Activated B cell treated with CpG ODN at 0.5 μM for 24 hours (primary cell): ENCODE measurements at regions of chr17 and their contacts with region 1.

Region 1: DNA sequence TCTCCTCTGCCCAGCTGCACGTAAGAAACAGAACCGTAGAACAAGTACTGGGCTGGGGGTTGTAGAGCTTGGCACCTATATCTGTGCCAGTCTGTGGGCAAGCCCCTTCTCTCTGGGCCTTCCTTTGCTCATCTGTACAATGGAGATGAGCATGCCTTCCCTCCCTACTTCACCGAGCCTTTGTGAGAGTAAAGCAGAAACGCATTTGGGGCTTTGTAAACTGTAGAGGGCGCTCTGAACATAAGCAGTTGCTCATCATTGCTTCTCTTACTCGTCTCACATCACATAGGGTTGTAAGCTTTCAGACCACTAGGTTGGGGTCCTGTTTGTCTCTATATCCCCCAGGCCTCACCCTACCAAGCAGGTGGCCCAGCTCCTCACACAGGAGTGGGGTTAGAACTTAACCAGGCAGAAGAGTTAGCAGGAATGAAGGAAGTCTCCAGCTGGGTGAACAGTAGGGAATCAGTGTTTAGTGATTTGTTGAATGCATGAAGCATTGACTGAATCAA is 15.1 kb downstream of the SAMD14 start:
- DNase-seq: no peak
- ATAC-seq: peak; percentile 18
- H3K4me3 Mint-ChIP-seq: peak overlapping the region; percentile 28
- H3K27ac Mint-ChIP-seq: no peak overlapping the region
- H3K4me1 Mint-ChIP-seq: peaks cover 14% of the 10 kb centered on the region
- H3K27me3 Mint-ChIP-seq: peaks cover 36% of the 10 kb centered on the region
- CTCF ChIP-seq: no peak

Region 2: DNA sequence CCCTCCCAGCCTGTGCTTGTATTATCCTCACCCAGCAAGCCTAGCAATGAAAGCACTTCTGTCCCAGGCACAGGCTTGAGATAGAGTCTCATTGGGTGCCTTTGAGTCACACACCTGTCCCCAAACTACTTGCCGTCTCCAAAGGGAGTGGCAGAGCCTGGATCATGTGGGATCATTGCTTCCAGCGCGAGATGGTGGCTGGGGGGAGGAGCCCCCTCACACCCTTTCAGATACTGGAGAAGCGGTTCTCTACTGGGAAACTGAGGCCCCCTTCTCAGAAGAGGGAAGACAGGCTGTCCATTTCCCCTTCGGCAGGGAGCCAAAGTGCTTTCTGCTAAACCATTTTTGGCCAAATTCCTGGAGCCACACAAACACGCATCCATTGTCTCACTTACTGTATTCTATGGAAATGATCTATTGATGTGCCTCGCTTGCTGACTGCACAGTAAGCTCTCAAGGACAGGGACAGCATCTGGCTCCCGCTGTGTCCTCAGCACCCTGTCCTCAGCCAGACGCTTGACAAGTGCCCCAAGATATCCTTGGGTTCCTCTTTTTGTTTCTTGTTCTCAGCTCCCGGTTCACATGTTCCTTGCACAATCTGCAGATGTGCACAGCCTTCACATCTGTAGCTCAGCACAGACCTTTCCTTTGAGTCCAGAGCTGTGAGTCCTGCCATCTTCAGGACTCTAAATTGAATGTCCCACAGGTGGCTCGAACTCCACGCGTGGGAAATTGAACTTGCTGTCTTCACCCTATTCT is 93.9 kb before region 1 on chr17:
- CTCF ChIA-PET with region 1: no interaction called
- POLR2A ChIA-PET with region 1: no interaction called
- intact Hi-C with region 1: no loop called
- DNase-seq: no peak
- ATAC-seq: no peak
- H3K4me3 Mint-ChIP-seq: no peak overlapping the region
- H3K27ac Mint-ChIP-seq: no peak overlapping the region
- H3K4me1 Mint-ChIP-seq: no peaks in the 10 kb centered on the region
- H3K27me3 Mint-ChIP-seq: peaks cover 3% of the 10 kb centered on the region
- CTCF ChIP-seq: no peak

Region 3: DNA sequence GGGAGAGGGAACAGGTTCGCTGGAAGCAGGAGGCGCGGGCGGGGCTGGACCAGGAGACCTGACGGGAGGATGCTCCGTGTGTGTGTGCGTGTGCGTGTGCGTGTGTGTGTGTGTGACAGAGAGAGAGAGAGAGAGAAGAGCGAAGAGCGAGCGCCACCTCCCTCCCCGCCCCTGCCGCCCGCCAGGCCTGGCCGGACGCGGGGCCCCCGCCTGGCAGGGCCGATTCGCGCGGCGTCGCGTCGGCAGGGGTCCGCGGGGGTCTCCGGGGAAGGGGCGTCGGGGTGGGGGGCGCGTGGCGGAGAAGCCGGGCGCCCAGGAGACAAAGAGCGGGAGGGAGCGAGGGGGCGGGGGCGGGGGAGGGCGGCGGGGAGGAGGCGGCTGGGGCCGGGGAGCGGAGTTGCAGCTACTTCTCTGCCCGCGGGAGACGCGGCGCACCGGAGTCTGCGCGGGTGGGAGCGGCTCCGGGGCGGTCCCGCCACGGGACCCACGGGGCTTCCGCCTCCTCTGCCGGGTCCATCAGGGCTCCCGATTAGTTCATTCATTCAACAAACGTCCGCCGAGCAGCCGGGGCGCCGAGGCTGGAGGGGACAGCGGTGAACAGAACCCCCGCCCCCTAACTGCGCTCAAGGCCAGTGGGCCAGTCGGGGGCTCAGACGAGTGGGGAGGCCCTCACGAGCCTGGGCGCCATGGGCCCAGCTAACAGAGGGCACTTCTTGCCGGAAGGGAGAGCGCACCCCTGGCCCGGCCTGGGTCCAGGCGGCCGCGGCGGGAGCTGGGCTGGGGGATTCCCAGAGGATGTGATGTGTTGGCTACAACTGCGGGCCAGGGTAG is 15.0 kb after region 1 on chr17 and contains the start of gene SAMD14:
- CTCF ChIA-PET with region 1: interaction called, 5 read pairs
- POLR2A ChIA-PET with region 1: interaction called, 7 read pairs
- intact Hi-C with region 1: loop called (anchors 1 kb)
- DNase-seq: peak; percentile 52
- ATAC-seq: peak; percentile 61
- H3K4me3 Mint-ChIP-seq: peak within 1 kb of the TSS; percentile 80
- H3K27ac Mint-ChIP-seq: peak within 1 kb of the TSS; percentile 63
- H3K4me1 Mint-ChIP-seq: peaks cover 37% of the 10 kb centered on the region
- H3K27me3 Mint-ChIP-seq: peaks cover 8% of the 10 kb centered on the region
- CTCF ChIP-seq: no peak
- total RNA-seq, gene SAMD14: 4.7 and 4.9 TPM in 2 replicates

Region 4: DNA sequence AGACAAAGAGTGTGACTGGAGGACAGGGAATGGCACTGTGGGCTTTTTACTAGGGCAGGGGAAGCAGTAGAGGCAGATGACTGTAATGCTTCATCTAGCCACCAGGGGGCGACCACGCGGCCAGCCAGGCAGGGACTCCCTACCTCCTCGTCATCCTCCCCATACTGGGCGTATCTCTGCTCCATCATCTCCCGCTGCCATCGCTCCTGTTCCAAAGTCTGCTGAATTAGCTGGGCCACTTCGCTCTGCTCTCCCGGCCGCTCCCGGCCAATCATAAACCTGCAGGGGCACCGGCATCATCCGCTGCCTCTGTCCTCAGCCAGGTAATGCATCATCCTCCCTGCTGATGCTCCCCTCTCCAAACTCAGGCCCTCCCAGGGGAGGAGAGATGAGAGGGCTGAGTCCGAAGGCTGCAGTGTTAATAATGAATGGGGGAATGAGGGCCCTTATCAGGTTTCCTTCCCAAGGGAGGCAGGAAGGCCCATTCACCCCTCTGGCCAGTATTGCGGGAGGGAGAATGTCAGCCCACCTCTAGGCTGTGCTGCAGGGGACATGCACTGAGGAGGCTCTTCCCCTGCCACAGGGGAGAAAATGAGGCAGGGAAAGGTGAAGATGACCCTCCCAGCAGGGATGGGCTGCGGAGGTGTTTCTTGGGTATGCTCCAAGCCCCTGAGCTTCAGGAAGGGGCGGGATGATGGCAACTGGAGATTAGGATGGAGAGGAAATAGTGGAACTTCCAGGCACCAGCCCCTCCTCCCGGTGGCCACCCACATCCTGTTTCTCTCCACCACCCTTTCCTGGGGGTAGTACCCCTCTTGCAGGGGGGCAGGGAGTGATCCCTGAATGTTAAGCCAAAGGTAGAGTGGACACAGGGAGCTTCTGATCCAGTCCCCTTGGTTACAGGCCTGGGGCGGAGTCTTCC is 25.3 kb after region 1 on chr17:
- CTCF ChIA-PET with region 1: interaction called, 11 read pairs
- POLR2A ChIA-PET with region 1: no interaction called
- intact Hi-C with region 1: no loop called
- DNase-seq: peak; percentile 76
- ATAC-seq: peak; percentile 85
- H3K4me3 Mint-ChIP-seq: peak overlapping the region; percentile 41
- H3K27ac Mint-ChIP-seq: peak overlapping the region; percentile 70
- H3K4me1 Mint-ChIP-seq: peaks cover 63% of the 10 kb centered on the region
- H3K27me3 Mint-ChIP-seq: no peaks in the 10 kb centered on the region
- CTCF ChIP-seq: peak; percentile 43

Region 5: DNA sequence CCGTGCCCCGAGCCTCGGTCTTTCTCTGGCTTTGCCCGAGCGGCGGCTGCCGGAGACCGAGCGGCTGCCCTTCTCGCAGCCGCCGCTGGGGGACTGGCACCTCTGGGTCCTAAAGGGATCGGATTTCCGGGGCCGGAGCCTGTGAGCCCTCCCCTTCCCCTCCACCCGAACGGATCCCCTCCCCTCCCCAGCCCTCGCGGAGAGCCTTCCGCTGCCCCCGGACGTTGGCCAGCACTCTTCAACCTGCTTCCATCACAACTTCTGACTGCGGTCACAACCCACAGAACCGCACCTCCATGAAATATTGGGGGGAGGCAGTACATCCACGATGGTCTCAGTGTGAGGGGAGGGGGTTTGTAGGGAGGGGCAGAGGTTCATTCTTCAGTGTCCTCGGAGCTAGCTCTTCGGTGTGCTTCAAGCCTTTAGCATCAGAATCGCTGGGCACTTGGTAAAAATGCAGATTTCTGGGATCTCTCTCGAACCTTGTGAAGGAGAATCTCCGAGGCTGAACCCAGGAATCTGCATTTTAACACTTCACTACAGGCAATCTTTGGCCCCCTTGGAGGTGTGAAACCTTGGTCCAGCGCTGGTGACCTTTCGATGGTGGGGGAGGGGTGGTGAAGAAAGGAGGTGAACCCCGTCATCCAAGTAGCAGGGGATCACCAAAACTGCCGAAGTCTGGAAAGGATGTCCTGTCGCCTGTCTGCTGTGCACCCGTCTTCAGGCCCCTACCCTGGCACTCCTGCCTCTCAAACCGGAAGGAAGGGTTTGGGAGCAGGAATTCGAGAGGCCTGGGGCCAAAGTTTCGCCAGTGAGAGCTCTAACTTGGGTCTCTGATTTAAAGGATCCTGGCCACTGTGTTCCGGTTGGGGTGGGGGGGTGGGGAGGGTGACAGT is 36.4 kb after region 1 on chr17:
- CTCF ChIA-PET with region 1: interaction called, 11 read pairs
- POLR2A ChIA-PET with region 1: interaction called, 10 read pairs
- intact Hi-C with region 1: no loop called
- DNase-seq: peak; percentile 80
- ATAC-seq: peak; percentile 40
- H3K4me3 Mint-ChIP-seq: peak overlapping the region; percentile 93
- H3K27ac Mint-ChIP-seq: peak overlapping the region; percentile 91
- H3K4me1 Mint-ChIP-seq: peaks cover 34% of the 10 kb centered on the region
- H3K27me3 Mint-ChIP-seq: no peaks in the 10 kb centered on the region
- CTCF ChIP-seq: no peak

Region 6: DNA sequence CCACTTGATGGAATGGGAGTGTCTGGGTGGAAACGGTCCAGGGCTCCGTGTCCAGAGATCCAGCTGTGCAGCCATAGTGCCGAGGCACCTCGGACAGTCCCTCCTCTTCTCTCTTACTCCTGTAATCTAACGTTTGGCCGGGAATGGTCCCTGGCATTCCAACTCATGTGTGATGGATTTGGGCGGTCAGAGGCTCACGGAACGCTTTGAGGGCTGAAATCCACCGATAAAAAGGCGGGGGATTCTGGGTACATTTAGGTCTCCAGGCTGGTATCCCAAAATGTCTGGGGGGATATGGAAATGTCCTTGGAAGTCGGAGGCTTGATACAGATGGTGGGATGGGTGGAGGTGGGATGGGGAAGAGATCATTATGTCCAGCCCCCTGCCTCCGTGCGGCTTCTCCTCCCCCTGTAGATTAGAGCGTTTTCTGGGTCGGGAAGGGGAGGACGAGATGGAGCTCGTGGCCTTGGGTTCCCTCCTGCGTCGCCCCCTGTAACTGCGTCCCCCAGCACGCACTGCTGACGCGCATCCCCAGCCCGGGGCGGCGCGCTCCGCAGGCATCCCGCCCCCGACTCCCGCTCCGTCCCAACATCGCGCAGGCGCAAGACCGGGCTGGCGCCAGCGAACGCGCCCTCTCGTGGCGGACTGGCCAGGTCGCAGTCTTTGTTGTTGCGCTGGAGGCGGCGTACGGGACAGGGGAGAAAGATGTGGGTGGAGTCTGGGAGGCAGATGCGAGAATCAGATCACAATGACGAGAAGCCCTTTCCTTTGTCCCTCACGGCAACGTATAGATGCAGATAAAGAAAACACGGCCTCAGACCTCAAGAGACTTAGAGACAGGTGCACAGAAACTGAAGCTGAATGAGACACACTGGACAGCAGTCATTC is 46.4 kb after region 1 on chr17:
- CTCF ChIA-PET with region 1: interaction called, 18 read pairs
- POLR2A ChIA-PET with region 1: no interaction called
- intact Hi-C with region 1: loop called (anchors 1 kb)
- DNase-seq: peak; percentile 89
- ATAC-seq: peak; percentile 95
- H3K4me3 Mint-ChIP-seq: peak overlapping the region; percentile 73
- H3K27ac Mint-ChIP-seq: peak overlapping the region; percentile 42
- H3K4me1 Mint-ChIP-seq: peaks cover 48% of the 10 kb centered on the region
- H3K27me3 Mint-ChIP-seq: no peaks in the 10 kb centered on the region
- CTCF ChIP-seq: peak; percentile 68

Region 7: GRCh38 chr17:50206604-50207293 is 91.8 kb after region 1 on chr17:
- CTCF ChIA-PET with region 1: no interaction called
- POLR2A ChIA-PET with region 1: no interaction called
- intact Hi-C with region 1: no loop called
- DNase-seq: no peak
- ATAC-seq: no peak
- H3K4me3 Mint-ChIP-seq: no peak overlapping the region
- H3K27ac Mint-ChIP-seq: no peak overlapping the region
- H3K4me1 Mint-ChIP-seq: peaks cover 3% of the 10 kb centered on the region
- H3K27me3 Mint-ChIP-seq: peaks cover 72% of the 10 kb centered on the region
- CTCF ChIP-seq: no peak

Region 8: GRCh38 chr17:50269477-50270434 is 154.9 kb after region 1 on chr17:
- CTCF ChIA-PET with region 1: interaction called, 4 read pairs
- POLR2A ChIA-PET with region 1: no interaction called
- intact Hi-C with region 1: loop called (anchors 2 kb)
- DNase-seq: peak; percentile 31
- ATAC-seq: peak; percentile 76
- H3K4me3 Mint-ChIP-seq: no peak overlapping the region
- H3K27ac Mint-ChIP-seq: no peak overlapping the region
- H3K4me1 Mint-ChIP-seq: peaks cover 6% of the 10 kb centered on the region
- H3K27me3 Mint-ChIP-seq: peaks cover 26% of the 10 kb centered on the region
- CTCF ChIP-seq: no peak

Region 9: GRCh38 chr17:50297407-50297865 is 182.5 kb after region 1 on chr17:
- CTCF ChIA-PET with region 1: interaction called, 5 read pairs
- POLR2A ChIA-PET with region 1: interaction called, 5 read pairs
- intact Hi-C with region 1: loop called (anchors 1 kb)
- DNase-seq: peak; percentile 67
- ATAC-seq: peak; percentile 100
- H3K4me3 Mint-ChIP-seq: no peak overlapping the region
- H3K27ac Mint-ChIP-seq: no peak overlapping the region
- H3K4me1 Mint-ChIP-seq: no peaks in the 10 kb centered on the region
- H3K27me3 Mint-ChIP-seq: peaks cover 17% of the 10 kb centered on the region
- CTCF ChIP-seq: peak; percentile 21

Region 10: DNA sequence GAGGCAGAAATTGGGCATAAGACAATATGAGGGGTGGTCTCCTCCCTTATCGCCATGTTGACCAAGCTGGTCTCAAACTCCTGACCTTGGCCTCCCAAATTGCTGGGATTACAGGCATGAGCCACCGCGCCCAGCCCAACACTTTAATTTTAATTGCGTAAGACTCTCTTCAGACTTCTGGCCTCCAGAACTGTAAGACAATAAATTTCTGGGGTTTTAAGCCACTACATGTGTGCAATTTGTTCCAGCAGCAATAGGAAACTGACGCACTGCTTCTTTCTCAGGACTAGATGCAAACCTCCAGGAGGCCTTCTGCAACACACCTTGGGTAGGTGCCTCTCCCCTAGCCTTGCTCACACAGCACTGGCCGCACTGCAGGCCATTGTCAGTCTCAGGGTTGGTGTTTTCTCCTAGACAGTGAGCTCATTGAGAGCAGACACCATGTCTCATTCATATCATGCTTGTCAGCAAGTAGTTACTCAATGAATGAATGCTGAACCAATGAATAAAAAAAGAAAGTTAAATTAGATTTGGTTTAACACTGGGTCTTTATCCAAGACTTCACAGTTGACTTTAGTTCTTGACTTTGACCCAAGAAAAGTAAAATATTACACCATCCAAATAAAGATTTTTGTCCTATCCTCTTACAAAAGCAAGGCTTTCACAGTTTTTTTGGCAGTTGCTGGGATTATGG is 305.7 kb after region 1 on chr17:
- CTCF ChIA-PET with region 1: no interaction called
- POLR2A ChIA-PET with region 1: no interaction called
- intact Hi-C with region 1: no loop called
- DNase-seq: no peak
- ATAC-seq: no peak
- H3K4me3 Mint-ChIP-seq: no peak overlapping the region
- H3K27ac Mint-ChIP-seq: peak overlapping the region; percentile 91
- H3K4me1 Mint-ChIP-seq: peaks cover 34% of the 10 kb centered on the region
- H3K27me3 Mint-ChIP-seq: no peaks in the 10 kb centered on the region
- CTCF ChIP-seq: no peak